B cell (primary cell): ENCODE measurements at regions of chr3 and their contacts with region 1.

Region 1: GRCh38 chr3:169772897-169773828 is at the start of gene MYNN:
- DNase-seq: peak; percentile 96
- ATAC-seq: peak; percentile 78
- H3K4me3 ChIP-seq: peak within 1 kb of the TSS; percentile 89 to 97 (median 91)
- H3K4me3 Mint-ChIP-seq: peak within 1 kb of the TSS; percentile 100
- H3K27ac ChIP-seq: peak within 1 kb of the TSS; percentile 97
- H3K27ac Mint-ChIP-seq: peak within 1 kb of the TSS; percentile 99
- H3K4me1 ChIP-seq: peaks cover 16 to 19% of the 10 kb centered on the region in 2 donors
- H3K4me1 Mint-ChIP-seq: peaks cover 50% of the 10 kb centered on the region
- H3K27me3 ChIP-seq: no peaks in the 10 kb centered on the region
- H3K27me3 Mint-ChIP-seq: no peaks in the 10 kb centered on the region
- CTCF ChIP-seq: no peak
- total RNA-seq, gene MYNN: 24.0 and 25.5 TPM in 2 replicates

Region 2: DNA sequence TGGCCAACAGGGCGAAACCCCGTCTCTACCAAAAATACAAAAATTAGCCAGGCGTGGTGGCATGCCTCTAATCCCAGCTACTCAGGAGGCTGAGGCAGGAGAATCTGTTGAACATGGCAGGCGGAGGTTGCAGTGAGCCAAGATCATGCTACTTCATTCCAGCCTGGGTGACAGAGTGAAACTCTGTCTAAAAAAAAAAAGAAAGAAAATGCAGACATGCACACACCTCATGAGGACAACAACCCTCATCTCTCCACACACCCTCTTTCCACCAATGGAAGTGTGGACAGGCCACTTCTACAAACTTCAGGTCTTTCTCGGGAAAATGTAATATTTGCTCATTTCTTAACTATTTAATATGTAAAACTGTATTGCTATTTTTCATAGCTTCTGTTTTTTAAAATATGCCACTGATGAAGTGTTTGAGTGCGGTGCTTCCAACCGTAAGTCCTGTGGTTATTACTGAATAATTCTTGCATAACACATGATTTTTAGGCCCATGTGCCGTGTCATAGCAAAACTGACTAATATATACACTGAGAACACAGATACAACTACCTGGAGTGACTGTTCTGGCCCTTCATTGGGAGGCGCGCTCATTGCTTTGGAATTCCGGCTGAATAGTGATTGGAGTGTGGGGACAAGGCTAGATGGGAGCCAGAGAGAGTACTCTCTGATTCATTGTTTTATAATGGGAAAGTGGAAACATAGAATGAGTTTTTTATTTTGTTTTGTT is 73.5 kb after region 1 on chr3:
- CTCF ChIA-PET with region 1: interaction called, 3 read pairs
- POLR2A ChIA-PET with region 1: interaction called, 3 read pairs
- intact Hi-C with region 1: loop called (anchors 1 kb)
- DNase-seq: peak; percentile 72
- ATAC-seq: peak; percentile 89
- H3K4me3 ChIP-seq: peak overlapping the region in 4 of 5 experiments; percentile 16 to 57 (median 43)
- H3K4me3 Mint-ChIP-seq: peak overlapping the region; percentile 80
- H3K27ac ChIP-seq: peak overlapping the region; percentile 68 to 74
- H3K27ac Mint-ChIP-seq: peak overlapping the region; percentile 95
- H3K4me1 ChIP-seq: peaks cover 44 to 46% of the 10 kb centered on the region in 2 donors
- H3K4me1 Mint-ChIP-seq: peaks cover 53% of the 10 kb centered on the region
- H3K27me3 ChIP-seq: no peaks in the 10 kb centered on the region
- H3K27me3 Mint-ChIP-seq: no peaks in the 10 kb centered on the region
- CTCF ChIP-seq: no peak